ENCODE measurements at regions of chr16 and their contacts with region 1.

Region 1: GRCh38 chr16:31507929-31508705 is at the start of gene RUSF1:
- DNase-seq: peak; percentile 94
- ATAC-seq: peak; percentile 77
- H3K4me3 Mint-ChIP-seq: peak within 1 kb of the TSS; percentile 88
- H3K27ac Mint-ChIP-seq: peak within 1 kb of the TSS; percentile 98
- H3K4me1 Mint-ChIP-seq: peaks cover 47% of the 10 kb centered on the region
- H3K27me3 Mint-ChIP-seq: no peaks in the 10 kb centered on the region
- total RNA-seq, gene RUSF1: 36.3 to 37.7 TPM

Region 2: GRCh38 chr16:31367853-31368252 is 140.3 kb before region 1 on chr16:
- CTCF ChIA-PET with region 1: no interaction called
- POLR2A ChIA-PET with region 1: no interaction called
- intact Hi-C with region 1: no loop called
- DNase-seq: no peak
- ATAC-seq: no peak
- H3K4me3 Mint-ChIP-seq: no peak overlapping the region
- H3K27ac Mint-ChIP-seq: no peak overlapping the region
- H3K4me1 Mint-ChIP-seq: peaks cover 13% of the 10 kb centered on the region
- H3K27me3 Mint-ChIP-seq: no peaks in the 10 kb centered on the region

Region 3: DNA sequence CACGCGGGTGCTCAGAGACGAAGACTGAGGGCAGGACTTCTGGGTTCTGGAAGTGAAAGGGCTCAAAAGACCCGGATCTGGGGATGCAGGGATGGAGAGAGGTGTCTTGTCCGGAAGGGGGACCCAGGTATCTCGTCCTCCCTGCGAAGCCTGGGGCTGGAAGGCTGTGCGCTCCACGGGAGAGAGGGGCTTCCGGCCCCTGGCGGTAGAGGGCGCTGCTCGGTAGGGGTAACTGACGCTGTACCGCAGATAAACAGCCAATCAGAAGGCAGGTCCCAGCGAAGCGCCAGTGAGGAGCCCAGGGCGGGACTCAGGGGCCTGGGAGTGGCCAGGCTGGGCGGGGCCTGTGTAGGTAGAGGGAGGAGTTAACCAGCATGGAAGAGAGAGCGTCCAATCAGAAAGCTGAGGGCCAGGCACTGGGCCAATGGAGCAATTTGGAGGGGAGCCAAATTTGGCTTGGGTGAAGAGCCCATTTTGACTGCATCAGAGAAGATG is 35.4 kb before region 1 on chr16:
- CTCF ChIA-PET with region 1: no interaction called
- POLR2A ChIA-PET with region 1: no interaction called
- intact Hi-C with region 1: loop called in 1 of 2 experiments (anchors 1 kb)
- DNase-seq: peak; percentile 74
- ATAC-seq: peak; percentile 54
- H3K4me3 Mint-ChIP-seq: peak overlapping the region; percentile 54
- H3K27ac Mint-ChIP-seq: no peak overlapping the region
- H3K4me1 Mint-ChIP-seq: peaks cover 22% of the 10 kb centered on the region
- H3K27me3 Mint-ChIP-seq: peaks cover 18% of the 10 kb centered on the region

Region 4: DNA sequence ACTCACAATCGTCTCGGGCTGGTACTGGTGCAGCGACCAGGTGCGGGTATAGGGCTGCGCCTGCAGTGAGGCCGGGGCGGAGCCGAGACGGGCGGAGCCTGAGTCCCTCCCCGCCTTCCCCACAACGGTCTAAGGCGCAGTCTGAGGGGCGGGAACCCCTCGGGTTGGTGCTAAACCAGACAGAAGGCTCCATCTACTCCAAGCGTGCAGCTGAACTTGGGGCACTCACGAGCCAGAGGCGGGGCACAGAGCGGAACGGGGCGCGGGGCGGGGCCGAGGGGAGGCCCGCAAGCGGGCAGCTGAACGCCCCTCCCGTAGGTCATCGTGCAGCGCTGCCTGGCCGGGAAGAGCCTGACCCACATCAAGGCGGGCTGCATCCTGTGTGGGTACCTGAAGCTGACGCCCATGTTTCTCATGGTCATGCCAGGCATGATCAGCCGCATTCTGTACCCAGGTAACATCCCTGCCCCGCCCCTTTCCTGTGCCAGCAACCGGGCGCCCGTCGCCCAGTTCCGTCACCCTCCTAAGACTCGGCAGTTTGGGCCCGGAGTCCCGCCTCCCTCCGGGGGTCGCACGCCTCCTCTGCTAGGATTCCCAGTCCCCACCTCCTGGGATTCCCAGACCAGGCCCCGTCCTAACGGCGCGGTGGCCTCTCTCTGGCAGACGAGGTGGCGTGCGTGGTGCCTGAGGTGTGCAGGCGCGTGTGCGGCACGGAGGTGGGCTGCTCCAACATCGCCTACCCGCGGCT is 20.2 kb before region 1 on chr16:
- CTCF ChIA-PET with region 1: no interaction called
- POLR2A ChIA-PET with region 1: interaction called, 3 read pairs
- intact Hi-C with region 1: loop called in 1 of 2 experiments (anchors 1 kb)
- DNase-seq: peak; percentile 74
- ATAC-seq: peak; percentile 93
- H3K4me3 Mint-ChIP-seq: peak overlapping the region; percentile 77
- H3K27ac Mint-ChIP-seq: no peak overlapping the region
- H3K4me1 Mint-ChIP-seq: peaks cover 6% of the 10 kb centered on the region
- H3K27me3 Mint-ChIP-seq: peaks cover 2% of the 10 kb centered on the region